Heart left ventricle (tissue), 16 donors: ENCODE measurements at regions of chr3 and their contacts with region 1.

Region 1: DNA sequence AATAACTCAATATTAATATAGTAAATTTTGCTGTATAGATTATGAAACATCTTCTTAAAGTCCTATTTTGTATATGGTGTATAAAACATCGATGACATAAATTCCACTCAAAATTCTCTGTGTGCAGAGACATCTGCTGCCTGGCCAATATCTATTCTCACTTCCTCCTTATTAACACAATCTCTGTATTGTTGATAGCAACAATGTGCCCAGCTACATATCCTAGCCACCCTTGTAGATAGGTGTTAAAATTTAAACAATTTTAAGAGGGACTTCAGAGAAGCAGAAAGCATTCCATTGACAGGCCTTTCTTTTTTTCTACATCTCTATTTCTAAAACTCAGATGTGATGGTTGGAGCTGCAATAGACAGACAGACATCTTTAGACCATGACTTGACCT is 72.3 kb downstream of the FGF12 start:
- DNase-seq: no peak
- ATAC-seq: peak; percentile 60 to 81 (median 74)
- H3K4me3 ChIP-seq: no peak overlapping the region
- H3K27ac ChIP-seq: peak overlapping the region in 10 of 12 donors; percentile 17 to 82 (median 64)
- H3K4me1 ChIP-seq: peaks cover 0 to 35% (median 4%) of the 10 kb centered on the region in 12 donors
- H3K27me3 ChIP-seq: no peaks in the 10 kb centered on the region
- CTCF ChIP-seq: no peak
- POLR2A ChIP-seq: no peak

Region 2: GRCh38 chr3:192577271-192577670 is 77.8 kb before region 1 on chr3:
- intact Hi-C with region 1: loop called in 1 of 10 experiments (anchors 5 kb)
- DNase-seq: no peak
- ATAC-seq: peak; percentile 61 to 88 (median 73)
- H3K4me3 ChIP-seq: no peak overlapping the region
- H3K27ac ChIP-seq: peak overlapping the region in 9 of 12 donors; percentile 7 to 60 (median 39)
- H3K4me1 ChIP-seq: peaks cover 0 to 14% (median 0%) of the 10 kb centered on the region in 12 donors
- H3K27me3 ChIP-seq: no peaks in the 10 kb centered on the region
- CTCF ChIP-seq: no peak
- POLR2A ChIP-seq: no peak

Region 3: GRCh38 chr3:192637803-192638202 is 17.2 kb before region 1 on chr3:
- intact Hi-C with region 1: loop called in 1 of 10 experiments (anchors 2 kb)
- DNase-seq: no peak
- ATAC-seq: peak in 3 of 4 donors; percentile 34 to 53 (median 45)
- H3K4me3 ChIP-seq: no peak overlapping the region
- H3K27ac ChIP-seq: peak overlapping the region; percentile 75 to 95 (median 87)
- H3K4me1 ChIP-seq: peaks cover 0 to 15% (median 2%) of the 10 kb centered on the region in 12 donors
- H3K27me3 ChIP-seq: no peaks in the 10 kb centered on the region
- CTCF ChIP-seq: no peak
- POLR2A ChIP-seq: no peak

Region 4: DNA sequence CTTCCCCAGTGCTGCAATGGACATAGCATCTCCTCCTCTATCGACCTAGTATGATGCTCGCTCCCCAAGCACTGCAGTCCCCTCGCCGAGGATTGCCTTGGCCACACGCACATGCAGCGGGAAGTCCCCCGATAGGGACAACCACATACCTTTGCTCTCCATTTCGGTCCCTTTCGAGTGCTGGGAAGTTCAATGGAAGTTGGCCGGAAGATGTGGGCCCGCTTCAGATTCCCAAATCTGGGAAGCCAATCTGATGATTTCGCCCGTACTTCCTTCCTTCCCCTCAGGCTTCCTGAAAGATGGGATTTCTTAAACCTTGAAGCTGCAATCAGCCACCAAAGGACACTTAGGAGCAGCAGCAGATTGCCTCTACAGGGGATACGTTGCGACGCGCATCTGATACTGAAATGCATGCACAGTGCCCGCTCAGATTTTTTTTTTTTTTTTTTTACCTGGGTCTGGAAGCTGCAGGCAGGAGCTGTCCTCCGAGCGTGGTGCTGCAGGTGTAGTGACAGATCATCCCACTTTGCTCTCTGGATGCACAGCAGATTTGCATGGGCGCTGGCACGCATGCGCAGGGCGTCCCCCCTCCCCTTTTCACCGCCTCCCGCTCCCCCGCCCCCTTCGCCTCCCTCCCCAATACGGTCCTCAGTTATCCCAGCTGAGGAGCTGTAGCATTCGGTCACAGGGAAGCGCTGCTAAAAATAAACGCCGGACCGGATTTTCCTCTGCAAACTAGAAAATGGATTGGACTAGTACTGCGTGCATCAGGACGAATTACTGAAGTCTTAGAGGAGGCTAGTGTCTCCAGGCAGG is 72.2 kb after region 1 on chr3 and contains the start of gene FGF12:
- intact Hi-C with region 1: loop called in 2 of 10 experiments (anchors 5 kb)
- DNase-seq: peak; percentile 82 to 90 (median 90)
- ATAC-seq: peak; percentile 87 to 95 (median 93)
- H3K4me3 ChIP-seq: peak within 1 kb of the TSS; percentile 19 to 70 (median 60)
- H3K27ac ChIP-seq: peak within 1 kb of the TSS; percentile 17 to 82 (median 74)
- H3K4me1 ChIP-seq: peaks cover 0 to 11% (median 1%) of the 10 kb centered on the region in 12 donors
- H3K27me3 ChIP-seq: no peaks in the 10 kb centered on the region
- CTCF ChIP-seq: no peak
- POLR2A ChIP-seq: peak in 1 of 2 donors; percentile 42
- total RNA-seq, gene FGF12: 118 to 420 (median 265) TPM

Region 5: GRCh38 chr3:192772240-192772894 is 117.3 kb after region 1 on chr3:
- intact Hi-C with region 1: loop called in 1 of 10 experiments (anchors 5 kb)
- DNase-seq: peak in 4 of 5 donors; percentile 29 to 54 (median 42)
- ATAC-seq: peak; percentile 75 to 94 (median 90)
- H3K4me3 ChIP-seq: no peak overlapping the region
- H3K27ac ChIP-seq: no peak overlapping the region
- H3K4me1 ChIP-seq: no peaks in the 10 kb centered on the region
- H3K27me3 ChIP-seq: no peaks in the 10 kb centered on the region
- CTCF ChIP-seq: peak in 11 of 12 donors; percentile 24 to 67 (median 49)
- POLR2A ChIP-seq: no peak

Region 6: DNA sequence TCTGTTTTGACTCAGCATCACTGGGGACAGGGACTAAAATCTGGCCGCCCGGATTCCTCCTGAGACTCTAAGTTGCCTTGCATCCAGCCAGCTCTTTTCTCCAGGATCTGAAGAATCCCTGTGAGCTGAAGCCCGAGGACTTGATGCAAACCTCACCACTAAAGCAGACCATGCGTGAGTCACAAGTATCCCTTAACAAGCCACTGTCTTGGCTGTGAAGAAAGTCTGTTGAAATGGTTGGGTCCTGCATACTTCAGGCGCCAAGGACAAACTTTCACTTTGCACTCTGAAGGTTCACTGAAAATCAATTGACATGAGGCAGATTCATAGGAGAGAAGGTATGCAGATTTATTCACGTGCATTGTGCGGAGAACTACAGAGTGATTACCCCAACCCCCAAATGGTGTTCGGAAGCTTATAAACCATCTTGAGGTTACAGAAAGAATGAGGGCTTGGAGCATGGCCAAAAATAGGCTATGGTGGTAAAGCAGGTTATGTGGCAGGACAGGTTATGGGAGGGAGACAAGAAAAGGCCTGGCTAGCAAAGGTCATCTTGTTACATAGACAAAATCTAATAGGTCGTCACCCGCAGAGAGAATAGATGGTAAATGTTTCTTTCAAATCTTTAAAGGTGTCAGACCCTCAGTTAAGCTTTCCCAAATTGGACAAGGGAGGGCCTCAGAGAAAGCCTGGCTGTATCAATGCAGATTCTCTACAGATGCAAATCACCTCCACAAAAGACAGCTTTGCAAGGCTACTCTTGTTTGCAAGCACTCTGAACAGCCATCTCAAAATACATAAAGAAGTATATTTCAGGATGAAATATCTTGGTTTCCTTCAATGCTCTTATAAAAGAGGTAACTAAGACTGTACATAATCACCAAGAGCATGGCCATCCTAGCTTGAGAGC is 459.6 kb after region 1 on chr3:
- intact Hi-C with region 1: loop called in 1 of 10 experiments (anchors 10 kb)
- DNase-seq: no peak
- ATAC-seq: no peak
- H3K4me3 ChIP-seq: no peak overlapping the region
- H3K27ac ChIP-seq: no peak overlapping the region
- H3K4me1 ChIP-seq: no peaks in the 10 kb centered on the region
- H3K27me3 ChIP-seq: no peaks in the 10 kb centered on the region
- CTCF ChIP-seq: no peak
- POLR2A ChIP-seq: no peak